ENCODE measurements at regions of chr3 and their contacts with region 1.

Region 1: DNA sequence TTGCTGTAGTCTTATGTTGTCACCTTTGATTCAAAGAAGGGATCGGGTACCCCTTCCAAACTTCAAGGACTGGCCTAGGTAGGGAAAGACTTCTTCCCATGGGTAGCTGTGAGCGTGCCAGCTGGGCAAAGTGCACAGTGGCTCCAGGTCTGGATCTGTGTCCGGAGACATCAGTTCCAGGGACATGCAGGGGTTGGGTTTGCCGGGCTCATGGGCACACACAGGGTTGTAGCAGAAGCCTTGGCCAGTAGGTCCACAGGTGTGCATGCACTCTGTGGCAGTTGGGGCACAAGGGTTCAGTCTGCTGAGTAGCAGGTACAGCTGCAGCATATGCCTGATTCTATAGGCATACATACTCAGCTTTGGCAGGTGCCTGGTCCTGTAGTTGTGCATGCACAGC is 111.2 kb downstream of the EFHB start:
- DNase-seq: no peak
- ATAC-seq: peak; percentile 10

Region 2: DNA sequence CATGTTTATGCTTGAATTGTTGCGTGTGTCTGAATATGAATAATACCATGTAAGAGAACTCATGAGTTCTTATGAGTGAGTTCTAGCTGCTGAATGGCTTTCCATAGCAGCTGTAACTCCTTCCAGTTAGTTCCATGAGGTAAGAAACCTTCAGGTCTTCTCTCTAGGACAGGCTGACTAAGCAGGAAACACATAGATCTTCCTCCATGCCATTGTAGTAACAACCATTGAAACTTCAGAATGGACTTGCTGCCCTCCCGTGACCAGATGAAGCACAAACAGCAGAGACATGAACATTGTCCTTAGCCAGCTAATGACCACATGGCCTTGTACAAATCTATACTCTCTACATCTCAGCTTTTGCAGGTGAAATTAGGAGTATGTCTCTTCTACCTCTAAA is 1728.2 kb after region 1 on chr3:
- intact Hi-C with region 1: loop called (anchors 5 kb)
- DNase-seq: no peak
- ATAC-seq: no peak

Measured in sciatic nerve (tissue), 2 donors.